Tibial artery (tissue), 4 donors: ENCODE measurements at regions of chr3 and their contacts with region 1.

Region 1: DNA sequence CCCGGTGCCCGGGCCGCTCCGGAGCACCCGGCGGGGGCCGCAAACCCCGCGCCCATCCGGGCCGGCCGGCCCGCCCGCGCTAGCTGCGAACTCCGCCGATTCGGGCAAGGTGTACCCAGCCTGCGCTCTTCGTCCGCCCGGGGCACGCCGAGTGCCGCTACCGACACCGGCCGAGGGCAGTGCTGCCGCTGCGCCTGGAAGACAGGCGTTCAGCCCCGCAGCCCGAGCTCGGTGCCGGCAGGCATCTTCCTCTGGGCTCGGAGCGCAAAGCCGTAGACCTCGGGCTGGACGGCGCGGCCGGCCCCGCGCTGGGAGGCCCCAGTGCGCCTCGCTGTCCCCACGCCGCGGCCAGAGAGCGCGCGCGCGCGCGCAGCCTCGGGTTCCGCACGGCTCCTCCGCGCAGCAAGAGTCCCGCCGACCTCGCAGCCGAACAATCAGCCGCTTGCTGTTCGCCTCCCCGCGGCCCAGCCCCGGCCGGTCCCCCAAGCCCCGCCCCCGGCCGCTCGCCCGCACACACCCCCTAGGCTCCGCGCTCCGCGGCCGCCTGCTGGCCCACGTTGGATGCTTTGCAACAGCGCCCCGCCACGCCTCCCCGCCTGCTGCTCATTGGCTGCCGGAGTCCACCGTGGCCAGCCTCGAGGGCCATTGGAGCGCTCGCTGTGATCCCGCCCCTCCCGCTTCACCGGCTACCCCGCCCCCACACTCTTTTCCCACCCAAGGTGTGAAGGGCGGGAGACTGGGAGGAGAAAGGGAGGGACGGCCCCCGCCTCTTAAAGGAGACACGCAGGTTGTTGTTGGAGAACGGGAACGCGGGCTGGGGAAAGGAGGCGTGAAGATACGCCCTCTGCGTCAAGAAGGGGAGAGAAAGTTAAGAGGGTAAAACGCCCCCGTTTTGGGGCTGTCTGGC is at the start of gene LRIG1:
- DNase-seq: peak; percentile 99 to 100
- H3K4me3 ChIP-seq: peak within 1 kb of the TSS; percentile 77 to 96
- H3K27ac ChIP-seq: peak within 1 kb of the TSS; percentile 91 to 99
- H3K4me1 ChIP-seq: peaks cover 0 to 31% (median 21%) of the 10 kb centered on the region in 4 donors
- H3K27me3 ChIP-seq: no peaks in the 10 kb centered on the region
- CTCF ChIP-seq: peak; percentile 50 to 62

Region 2: GRCh38 chr3:66276705-66277274 is 224.0 kb before region 1 on chr3:
- intact Hi-C with region 1: loop called (anchors 10 kb)
- DNase-seq: peak in 1 of 2 donors; percentile 55
- H3K4me3 ChIP-seq: no peak overlapping the region
- H3K27ac ChIP-seq: no peak overlapping the region
- H3K4me1 ChIP-seq: no peaks in the 10 kb centered on the region
- H3K27me3 ChIP-seq: no peaks in the 10 kb centered on the region
- CTCF ChIP-seq: peak; percentile 64 to 77

Region 3: GRCh38 chr3:66407611-66408218 is 93.1 kb before region 1 on chr3:
- intact Hi-C with region 1: loop called (anchors 5 kb)
- DNase-seq: peak; percentile 59 to 80
- H3K4me3 ChIP-seq: no peak overlapping the region
- H3K27ac ChIP-seq: peak overlapping the region; percentile 69 to 77
- H3K4me1 ChIP-seq: peaks cover 5 to 81% (median 61%) of the 10 kb centered on the region in 4 donors
- H3K27me3 ChIP-seq: no peaks in the 10 kb centered on the region
- CTCF ChIP-seq: peak; percentile 75 to 89

Region 4: DNA sequence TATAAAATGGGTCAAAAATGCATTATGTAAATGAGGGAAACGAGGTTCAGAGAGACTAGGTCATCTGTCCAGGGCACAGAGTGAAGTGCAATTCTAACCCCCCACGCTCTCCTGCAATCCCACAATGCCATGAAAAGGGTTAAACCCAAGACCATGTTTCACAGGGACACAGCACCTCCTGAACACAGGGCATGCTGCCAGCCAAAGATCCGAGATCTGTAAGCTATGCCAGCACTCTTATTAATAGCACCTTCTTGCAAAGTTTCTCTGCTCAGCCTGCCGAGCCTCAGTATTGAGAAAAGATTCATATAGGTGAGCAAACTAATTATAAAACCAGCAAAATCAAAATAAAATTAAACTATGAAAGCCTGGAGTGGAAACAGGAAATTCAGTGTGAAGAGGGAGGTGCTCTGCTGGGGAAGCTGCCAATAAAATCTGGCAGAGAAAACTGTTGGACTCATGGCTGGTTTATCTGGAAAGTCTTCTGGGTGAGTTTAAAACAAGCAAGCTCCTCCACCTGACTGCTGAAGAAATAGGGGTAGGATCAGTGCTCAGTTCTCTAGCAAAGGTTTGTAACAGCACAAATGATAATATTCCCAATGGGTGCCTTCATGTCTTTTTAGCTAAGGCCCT is 50.3 kb before region 1 on chr3:
- intact Hi-C with region 1: loop called (anchors 5 kb)
- DNase-seq: peak; percentile 73 to 84
- H3K4me3 ChIP-seq: peak overlapping the region in 1 of 2 donors; percentile 4
- H3K27ac ChIP-seq: peak overlapping the region; percentile 71 to 82
- H3K4me1 ChIP-seq: peaks cover 0 to 83% (median 63%) of the 10 kb centered on the region in 4 donors
- H3K27me3 ChIP-seq: no peaks in the 10 kb centered on the region
- CTCF ChIP-seq: no peak

Region 5: GRCh38 chr3:66554178-66554577 is 53.3 kb after region 1 on chr3:
- intact Hi-C with region 1: loop called (anchors 10 kb)
- DNase-seq: no peak
- H3K4me3 ChIP-seq: no peak overlapping the region
- H3K27ac ChIP-seq: no peak overlapping the region
- H3K4me1 ChIP-seq: peaks cover 0 to 14% (median 6%) of the 10 kb centered on the region in 4 donors
- H3K27me3 ChIP-seq: no peaks in the 10 kb centered on the region
- CTCF ChIP-seq: no peak

Region 6: GRCh38 chr3:66816090-66816761 is 315.4 kb after region 1 on chr3:
- intact Hi-C with region 1: loop called (anchors 10 kb)
- DNase-seq: no peak
- H3K4me3 ChIP-seq: no peak overlapping the region
- H3K27ac ChIP-seq: no peak overlapping the region
- H3K4me1 ChIP-seq: peaks cover 0 to 4% (median 0%) of the 10 kb centered on the region in 4 donors
- H3K27me3 ChIP-seq: no peaks in the 10 kb centered on the region
- CTCF ChIP-seq: peak; percentile 55 to 68